CD8-positive, alpha-beta T cell (primary cell): ENCODE measurements at regions of chr2 and their contacts with region 1.

Region 1: DNA sequence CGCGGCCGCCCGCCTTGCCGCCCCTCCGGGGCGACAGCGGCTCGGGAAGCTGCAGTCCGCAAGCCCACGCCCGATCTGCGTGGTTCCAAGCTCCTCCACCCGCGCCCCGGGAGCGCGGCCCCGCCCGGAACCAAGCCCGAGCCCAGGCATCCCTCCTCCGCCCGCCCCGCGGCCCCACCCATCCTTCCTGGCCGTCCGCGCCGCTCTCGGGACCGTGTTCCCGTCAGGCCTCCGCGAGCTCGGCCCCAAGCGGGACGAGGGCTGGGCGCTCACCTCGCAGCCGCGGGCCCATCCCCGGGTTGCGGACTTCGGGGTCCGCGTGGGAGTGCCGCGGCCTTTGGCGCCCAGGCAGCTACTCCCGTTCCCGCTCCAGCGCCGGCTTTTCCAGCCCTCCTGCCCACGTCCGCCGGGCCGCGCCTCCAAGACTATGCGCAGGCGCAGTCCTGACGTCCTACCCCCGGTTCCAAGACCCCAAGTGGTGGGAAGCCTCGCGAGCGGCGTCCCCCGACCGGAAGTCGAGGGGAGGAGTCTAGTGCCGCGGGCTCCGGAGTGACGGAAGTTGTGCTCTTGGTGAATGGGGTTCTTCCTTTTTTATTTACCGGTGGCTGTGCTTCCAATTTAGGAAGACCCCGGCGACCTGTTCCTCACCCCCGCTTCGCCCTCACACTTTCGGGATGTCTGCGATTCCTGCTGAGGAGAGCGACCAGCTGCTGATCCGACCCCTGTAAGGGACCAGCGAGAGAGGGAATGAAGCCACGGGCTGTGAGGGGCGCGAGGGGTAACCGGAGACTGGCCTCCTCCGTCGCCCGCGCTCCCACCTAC is at the starts of genes CPSF3 and ITGB1BP1:
- DNase-seq: peak; percentile 92 to 99 (median 97)
- ATAC-seq: peak; percentile 86
- H3K4me3 ChIP-seq: peak within 1 kb of the TSS; percentile 93 to 98
- H3K4me3 Mint-ChIP-seq: no peak within 1 kb of the TSS
- H3K27ac ChIP-seq: peak within 1 kb of the TSS; percentile 89 to 90
- H3K27ac Mint-ChIP-seq: peak within 1 kb of the TSS; percentile 89
- H3K4me1 ChIP-seq: peaks cover 22% of the 10 kb centered on the region
- H3K4me1 Mint-ChIP-seq: peaks cover 34% of the 10 kb centered on the region
- H3K27me3 ChIP-seq: no peaks in the 10 kb centered on the region
- H3K27me3 Mint-ChIP-seq: no peaks in the 10 kb centered on the region
- CTCF ChIP-seq: no peak
- total RNA-seq, gene CPSF3: 14.1 to 14.7 TPM
- total RNA-seq, gene ITGB1BP1: 37.2 to 38.8 TPM

Region 2: GRCh38 chr2:7456762-7457161 is 1966.5 kb before region 1 on chr2:
- CTCF ChIA-PET with region 1: no interaction called
- POLR2A ChIA-PET with region 1: no interaction called
- intact Hi-C with region 1: loop called in 1 of 2 experiments (anchors 5 kb)
- DNase-seq: no peak
- ATAC-seq: no peak
- H3K4me3 ChIP-seq: no peak overlapping the region
- H3K4me3 Mint-ChIP-seq: no peak overlapping the region
- H3K27ac ChIP-seq: no peak overlapping the region
- H3K27ac Mint-ChIP-seq: no peak overlapping the region
- H3K4me1 ChIP-seq: peaks cover 36% of the 10 kb centered on the region
- H3K4me1 Mint-ChIP-seq: peaks cover 55% of the 10 kb centered on the region
- H3K27me3 ChIP-seq: no peaks in the 10 kb centered on the region
- H3K27me3 Mint-ChIP-seq: no peaks in the 10 kb centered on the region
- CTCF ChIP-seq: no peak

Region 3: DNA sequence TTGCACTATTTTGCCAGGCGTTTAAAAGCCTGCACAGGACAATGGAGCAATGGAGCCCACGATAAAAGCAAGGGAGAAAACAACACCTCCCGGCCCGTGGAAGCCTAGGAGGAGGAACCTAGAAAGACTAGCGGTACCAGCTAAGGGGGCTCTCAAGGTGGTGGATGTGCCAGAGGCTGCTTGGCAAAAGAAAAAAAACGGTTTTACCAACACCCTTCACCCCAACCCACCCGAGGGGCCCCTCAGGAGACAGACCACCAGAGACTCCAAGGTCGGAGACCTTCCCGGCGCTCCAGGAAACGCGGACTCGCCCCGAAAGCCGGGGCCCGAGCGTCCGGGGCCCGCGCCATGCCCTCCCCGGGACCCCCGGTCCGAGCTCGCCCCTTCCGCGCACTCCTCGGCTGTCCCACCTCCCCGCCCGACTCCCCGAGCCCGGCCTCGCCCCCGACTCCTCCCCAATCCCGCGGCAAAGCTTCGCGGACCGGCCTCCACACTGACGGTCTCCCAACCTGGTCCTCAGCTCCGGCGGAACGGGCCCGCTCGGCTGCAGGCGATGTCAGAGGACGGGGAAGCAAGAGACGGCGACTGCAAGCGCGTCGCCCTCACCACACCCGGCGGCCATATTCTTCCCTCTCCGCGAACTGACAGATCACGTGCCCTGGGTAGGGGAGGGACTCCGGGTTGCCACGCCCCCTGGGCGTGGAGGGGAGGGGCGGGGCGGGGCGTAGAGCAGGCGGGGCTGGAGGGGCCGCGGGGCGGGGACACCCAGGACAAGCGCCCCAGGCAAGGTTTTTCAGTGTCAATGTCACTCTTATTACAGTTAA is 586.1 kb before region 1 on chr2 and contains the start of gene KIDINS220:
- CTCF ChIA-PET with region 1: no interaction called
- POLR2A ChIA-PET with region 1: no interaction called
- intact Hi-C with region 1: loop called in 1 of 2 experiments (anchors 5 kb)
- DNase-seq: peak; percentile 74 to 92 (median 85)
- ATAC-seq: peak; percentile 96
- H3K4me3 ChIP-seq: peak within 1 kb of the TSS; percentile 76 to 96
- H3K4me3 Mint-ChIP-seq: peak within 1 kb of the TSS; percentile 100
- H3K27ac ChIP-seq: peak within 1 kb of the TSS; percentile 62 to 81
- H3K27ac Mint-ChIP-seq: peak within 1 kb of the TSS; percentile 99
- H3K4me1 ChIP-seq: peaks cover 49% of the 10 kb centered on the region
- H3K4me1 Mint-ChIP-seq: peaks cover 55% of the 10 kb centered on the region
- H3K27me3 ChIP-seq: peaks cover 0 to 2% of the 10 kb centered on the region in 2 experiments
- H3K27me3 Mint-ChIP-seq: no peaks in the 10 kb centered on the region
- CTCF ChIP-seq: no peak
- total RNA-seq, gene KIDINS220: 26.2 to 28.8 TPM

Region 4: DNA sequence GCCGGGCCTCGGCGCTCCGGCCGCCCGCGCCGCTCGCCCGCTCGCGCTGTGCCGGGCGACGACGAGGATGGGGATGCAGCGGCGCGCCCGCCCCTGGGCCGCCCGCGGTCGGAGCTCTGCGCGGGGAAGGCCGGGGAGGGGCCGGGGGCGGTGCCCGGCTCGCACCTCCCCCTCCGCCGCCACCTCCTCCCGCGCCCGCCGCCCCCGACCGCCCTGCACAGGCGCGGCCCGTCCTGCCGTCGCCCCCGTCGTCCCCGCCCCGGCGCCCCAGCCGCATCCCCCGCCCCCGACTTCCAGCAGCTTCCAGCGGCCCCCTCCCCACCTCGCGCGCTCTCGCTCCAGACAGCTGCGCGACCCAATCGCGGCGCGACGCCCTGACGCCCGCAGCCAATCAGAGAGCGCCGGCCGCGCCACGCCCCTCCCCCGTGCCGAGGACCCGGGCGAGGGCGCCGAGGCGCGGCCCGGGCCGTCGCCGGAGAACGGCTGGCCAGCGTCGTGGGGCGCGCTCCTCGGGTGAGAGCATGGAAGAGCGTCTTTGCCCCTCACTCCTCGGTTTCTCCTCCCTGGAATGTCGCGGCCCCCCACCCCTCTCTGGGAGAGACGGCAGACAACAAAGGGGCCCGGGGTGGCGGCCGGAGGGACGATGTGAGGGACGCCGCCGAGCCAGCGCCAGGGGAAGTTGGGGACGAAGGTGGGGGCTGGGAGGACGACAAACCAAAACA is 419.5 kb before region 1 on chr2 and contains the start of gene MBOAT2:
- CTCF ChIA-PET with region 1: no interaction called
- POLR2A ChIA-PET with region 1: no interaction called
- intact Hi-C with region 1: loop called in 1 of 2 experiments (anchors 5 kb)
- DNase-seq: peak; percentile 39 to 88 (median 71)
- ATAC-seq: peak; percentile 88
- H3K4me3 ChIP-seq: peak within 1 kb of the TSS; percentile 53 to 69
- H3K4me3 Mint-ChIP-seq: peak within 1 kb of the TSS; percentile 83
- H3K27ac ChIP-seq: peak within 1 kb of the TSS in 1 of 2 experiments; percentile 18
- H3K27ac Mint-ChIP-seq: peak within 1 kb of the TSS; percentile 60
- H3K4me1 ChIP-seq: peaks cover 9% of the 10 kb centered on the region
- H3K4me1 Mint-ChIP-seq: peaks cover 16% of the 10 kb centered on the region
- H3K27me3 ChIP-seq: no peaks in the 10 kb centered on the region
- H3K27me3 Mint-ChIP-seq: peaks cover 5% of the 10 kb centered on the region
- CTCF ChIP-seq: no peak
- total RNA-seq, gene MBOAT2: 0.54 to 1.1 TPM

Region 5: GRCh38 chr2:9474361-9474967 is 51.2 kb after region 1 on chr2 and contains the start of gene IAH1:
- CTCF ChIA-PET with region 1: no interaction called
- POLR2A ChIA-PET with region 1: interaction called, 20 read pairs
- intact Hi-C with region 1: loop called (anchors 1 kb)
- DNase-seq: peak; percentile 58 to 86 (median 74)
- ATAC-seq: peak; percentile 80
- H3K4me3 ChIP-seq: peak within 1 kb of the TSS; percentile 83 to 91
- H3K4me3 Mint-ChIP-seq: peak within 1 kb of the TSS; percentile 84
- H3K27ac ChIP-seq: peak within 1 kb of the TSS; percentile 95 to 97
- H3K27ac Mint-ChIP-seq: peak within 1 kb of the TSS; percentile 90
- H3K4me1 ChIP-seq: peaks cover 18% of the 10 kb centered on the region
- H3K4me1 Mint-ChIP-seq: peaks cover 50% of the 10 kb centered on the region
- H3K27me3 ChIP-seq: no peaks in the 10 kb centered on the region
- H3K27me3 Mint-ChIP-seq: no peaks in the 10 kb centered on the region
- CTCF ChIP-seq: no peak
- total RNA-seq, gene IAH1: 48.2 to 52.5 TPM

Region 6: GRCh38 chr2:9843229-9844035 is 420.1 kb after region 1 on chr2 and contains the start of gene TAF1B:
- CTCF ChIA-PET with region 1: no interaction called
- POLR2A ChIA-PET with region 1: no interaction called
- intact Hi-C with region 1: loop called (anchors 2 to 5 kb)
- DNase-seq: peak; percentile 53 to 93 (median 84)
- ATAC-seq: peak; percentile 84
- H3K4me3 ChIP-seq: peak within 1 kb of the TSS; percentile 71 to 74
- H3K4me3 Mint-ChIP-seq: peak within 1 kb of the TSS; percentile 93
- H3K27ac ChIP-seq: peak within 1 kb of the TSS; percentile 65 to 84
- H3K27ac Mint-ChIP-seq: peak within 1 kb of the TSS; percentile 90
- H3K4me1 ChIP-seq: peaks cover 20% of the 10 kb centered on the region
- H3K4me1 Mint-ChIP-seq: peaks cover 48% of the 10 kb centered on the region
- H3K27me3 ChIP-seq: no peaks in the 10 kb centered on the region
- H3K27me3 Mint-ChIP-seq: no peaks in the 10 kb centered on the region
- CTCF ChIP-seq: no peak
- total RNA-seq, gene TAF1B: 13.3 to 15.8 TPM

Region 7: GRCh38 chr2:10079234-10079869 is 656.0 kb after region 1 on chr2:
- CTCF ChIA-PET with region 1: no interaction called
- POLR2A ChIA-PET with region 1: no interaction called
- intact Hi-C with region 1: no loop called
- DNase-seq: peak in 3 of 9 experiments; percentile 12 to 40 (median 31)
- ATAC-seq: peak; percentile 28
- H3K4me3 ChIP-seq: peak overlapping the region in 1 of 2 experiments; percentile 1
- H3K4me3 Mint-ChIP-seq: peak overlapping the region; percentile 84
- H3K27ac ChIP-seq: no peak overlapping the region
- H3K27ac Mint-ChIP-seq: no peak overlapping the region
- H3K4me1 ChIP-seq: peaks cover 22% of the 10 kb centered on the region
- H3K4me1 Mint-ChIP-seq: peaks cover 9% of the 10 kb centered on the region
- H3K27me3 ChIP-seq: peaks cover 21 to 34% of the 10 kb centered on the region in 2 experiments
- H3K27me3 Mint-ChIP-seq: peaks cover 69% of the 10 kb centered on the region
- CTCF ChIP-seq: no peak